ENCODE measurements at regions of chr5 and their contacts with region 1.

Region 1: GRCh38 chr5:34656001-34656699 is at the start of gene RAI14:
- DNase-seq: peak; percentile 90
- total RNA-seq, gene RAI14: 76.1 to 160 TPM

Region 2: GRCh38 chr5:34533582-34534522 is 122.3 kb before region 1 on chr5:
- intact Hi-C with region 1: loop called in 1 of 2 experiments (anchors 5 kb)
- DNase-seq: no peak

Region 3: GRCh38 chr5:34608859-34609648 is 47.1 kb before region 1 on chr5:
- intact Hi-C with region 1: loop called in 1 of 2 experiments (anchors 5 kb)
- DNase-seq: no peak

Region 4: DNA sequence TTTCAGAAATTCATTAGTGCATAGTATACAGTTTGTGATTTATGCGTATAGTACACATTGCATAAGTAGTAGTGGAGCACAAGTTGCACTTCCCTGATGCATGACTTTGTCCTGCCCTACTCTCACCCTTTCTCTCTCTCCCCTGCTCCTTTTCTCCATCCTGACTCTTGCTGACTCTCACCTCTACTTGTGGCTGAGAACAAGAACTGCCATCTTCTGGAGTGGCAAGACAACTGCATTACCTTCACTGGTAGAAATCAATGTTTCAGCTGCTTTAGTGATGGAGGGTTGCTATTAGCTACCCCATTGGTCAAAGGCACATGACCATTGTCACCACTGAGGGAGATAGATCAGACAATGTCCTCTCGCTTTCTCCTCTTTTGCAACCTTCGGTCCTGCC is 988.4 kb after region 1 on chr5:
- intact Hi-C with region 1: loop called in 1 of 2 experiments (anchors 10 kb)
- DNase-seq: no peak